Head of caudate nucleus (tissue), 42 donors: ENCODE measurements at regions of chr1 and their contacts with region 1.

Region 1: DNA sequence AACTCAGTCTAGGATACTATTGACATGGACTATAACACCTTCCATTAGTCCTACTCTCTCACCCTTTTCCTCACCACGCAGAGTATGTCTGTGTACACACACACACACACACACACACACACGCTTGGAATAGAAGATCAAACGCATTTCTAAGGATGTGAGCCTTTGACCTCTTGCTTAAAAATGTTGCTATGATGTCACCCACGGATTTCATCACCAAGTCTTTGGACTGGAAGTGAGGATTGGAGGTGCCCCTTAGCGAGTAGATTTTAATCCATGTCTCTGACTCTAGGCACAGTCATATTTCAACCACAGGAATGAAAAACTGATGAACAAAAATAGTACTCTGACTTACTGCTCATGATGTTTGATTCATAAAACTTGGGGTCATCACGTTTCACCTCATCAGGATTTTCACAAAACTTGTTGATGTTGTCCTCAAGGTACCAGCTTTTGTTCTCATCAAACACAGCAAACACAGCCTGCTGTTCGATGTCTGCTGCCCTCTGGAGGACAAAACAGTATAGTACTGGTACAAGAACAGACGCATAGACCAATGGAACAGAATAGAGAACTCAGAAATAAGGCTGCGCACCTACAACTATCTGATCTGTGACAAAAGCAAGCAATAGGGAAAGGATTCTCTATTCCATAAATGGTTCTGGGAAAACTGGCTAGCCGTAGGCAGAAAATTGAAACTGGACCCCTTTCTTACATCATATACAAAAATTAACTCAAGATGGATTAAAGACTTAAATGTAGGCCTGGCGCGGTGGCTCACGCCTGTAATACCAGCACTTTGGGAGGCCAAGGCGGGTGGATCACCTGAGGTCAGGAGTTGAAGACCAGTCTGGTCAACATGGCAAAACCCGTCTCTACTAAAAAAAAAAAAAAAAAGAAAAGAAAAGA is 39.9 kb downstream of the F5 start:
- DNase-seq: peak; percentile 18 to 87 (median 62)

Region 2: GRCh38 chr1:169466259-169467230 is 79.8 kb before region 1 on chr1:
- intact Hi-C with region 1: loop called (anchors 5 kb)
- DNase-seq: peak in 11 of 42 donors; percentile 26 to 72 (median 35)

Region 3: DNA sequence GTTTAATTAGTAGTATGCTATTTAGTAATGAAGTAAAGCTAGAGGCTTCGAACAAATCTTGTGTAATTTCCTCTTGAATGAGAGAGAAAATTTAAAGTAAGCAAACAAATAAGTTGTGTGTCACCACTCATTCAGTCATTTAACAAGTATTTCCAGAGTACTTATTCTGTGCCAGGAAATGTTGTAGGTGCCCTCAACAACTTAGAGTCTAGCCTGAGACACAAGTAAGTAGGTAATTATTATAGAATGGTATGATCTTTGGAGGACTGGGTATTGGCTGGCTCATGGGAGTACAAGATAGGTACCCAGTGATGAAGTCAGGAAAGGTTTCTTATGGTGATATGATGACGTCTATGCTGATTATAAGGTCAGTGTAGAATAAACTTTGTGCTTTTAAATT is 265.8 kb after region 1 on chr1:
- intact Hi-C with region 1: no loop called
- DNase-seq: no peak